CD8-positive, alpha-beta T cell (primary cell): ENCODE measurements at regions of chr19 and their contacts with region 1.

Region 1: GRCh38 chr19:18203863-18204393 is at the start of gene RAB3A:
- DNase-seq: peak; percentile 98 to 100 (median 100)
- ATAC-seq: peak; percentile 90
- H3K4me3 ChIP-seq: peak within 1 kb of the TSS; percentile 60 to 91
- H3K4me3 Mint-ChIP-seq: peak within 1 kb of the TSS; percentile 96
- H3K27ac ChIP-seq: peak within 1 kb of the TSS; percentile 76 to 81
- H3K27ac Mint-ChIP-seq: peak within 1 kb of the TSS; percentile 96
- H3K4me1 ChIP-seq: peaks cover 17% of the 10 kb centered on the region
- H3K4me1 Mint-ChIP-seq: peaks cover 21% of the 10 kb centered on the region
- H3K27me3 ChIP-seq: no peaks in the 10 kb centered on the region
- H3K27me3 Mint-ChIP-seq: peaks cover 5% of the 10 kb centered on the region
- CTCF ChIP-seq: no peak
- total RNA-seq, gene RAB3A: 16.8 to 19.4 TPM

Region 2: GRCh38 chr19:18007044-18007916 is 196.6 kb before region 1 on chr19:
- CTCF ChIA-PET with region 1: no interaction called
- POLR2A ChIA-PET with region 1: no interaction called
- intact Hi-C with region 1: loop called in 1 of 2 experiments (anchors 1 kb)
- DNase-seq: peak; percentile 66 to 90 (median 80)
- ATAC-seq: peak; percentile 57
- H3K4me3 ChIP-seq: peak overlapping the region; percentile 48 to 61
- H3K4me3 Mint-ChIP-seq: peak overlapping the region; percentile 88
- H3K27ac ChIP-seq: peak overlapping the region; percentile 69 to 72
- H3K27ac Mint-ChIP-seq: peak overlapping the region; percentile 89
- H3K4me1 ChIP-seq: peaks cover 43% of the 10 kb centered on the region
- H3K4me1 Mint-ChIP-seq: peaks cover 40% of the 10 kb centered on the region
- H3K27me3 ChIP-seq: no peaks in the 10 kb centered on the region
- H3K27me3 Mint-ChIP-seq: no peaks in the 10 kb centered on the region
- CTCF ChIP-seq: peak; percentile 97

Region 3: GRCh38 chr19:18192673-18193387 is 11.1 kb before region 1 on chr19 and contains the start of gene MPV17L2:
- CTCF ChIA-PET with region 1: interaction called, 23 read pairs
- POLR2A ChIA-PET with region 1: interaction called, 10 read pairs
- intact Hi-C with region 1: loop called (anchors 1 kb)
- DNase-seq: peak; percentile 95 to 100 (median 97)
- ATAC-seq: peak; percentile 84
- H3K4me3 ChIP-seq: peak within 1 kb of the TSS; percentile 73
- H3K4me3 Mint-ChIP-seq: peak within 1 kb of the TSS; percentile 87
- H3K27ac ChIP-seq: peak within 1 kb of the TSS; percentile 64 to 82
- H3K27ac Mint-ChIP-seq: peak within 1 kb of the TSS; percentile 90
- H3K4me1 ChIP-seq: peaks cover 18% of the 10 kb centered on the region
- H3K4me1 Mint-ChIP-seq: peaks cover 22% of the 10 kb centered on the region
- H3K27me3 ChIP-seq: no peaks in the 10 kb centered on the region
- H3K27me3 Mint-ChIP-seq: no peaks in the 10 kb centered on the region
- CTCF ChIP-seq: no peak
- total RNA-seq, gene MPV17L2: 4.0 to 5.2 TPM

Region 4: GRCh38 chr19:18328340-18329034 is 124.6 kb after region 1 on chr19:
- CTCF ChIA-PET with region 1: interaction called, 3 read pairs
- POLR2A ChIA-PET with region 1: interaction called, 3 read pairs
- intact Hi-C with region 1: loop called (anchors 1 to 2 kb)
- DNase-seq: peak; percentile 75 to 94 (median 84)
- ATAC-seq: peak; percentile 99
- H3K4me3 ChIP-seq: peak overlapping the region; percentile 17 to 25
- H3K4me3 Mint-ChIP-seq: peak overlapping the region; percentile 62
- H3K27ac ChIP-seq: peak overlapping the region in 1 of 2 experiments; percentile 31
- H3K27ac Mint-ChIP-seq: peak overlapping the region; percentile 2
- H3K4me1 ChIP-seq: peaks cover 14% of the 10 kb centered on the region
- H3K4me1 Mint-ChIP-seq: peaks cover 13% of the 10 kb centered on the region
- H3K27me3 ChIP-seq: no peaks in the 10 kb centered on the region
- H3K27me3 Mint-ChIP-seq: no peaks in the 10 kb centered on the region
- CTCF ChIP-seq: peak; percentile 85

Region 5: GRCh38 chr19:18419195-18419698 is 215.3 kb after region 1 on chr19 and contains the start of gene SSBP4:
- CTCF ChIA-PET with region 1: interaction called, 3 read pairs
- POLR2A ChIA-PET with region 1: no interaction called
- intact Hi-C with region 1: loop called in 1 of 2 experiments (anchors 2 kb)
- DNase-seq: peak; percentile 43 to 87 (median 61)
- ATAC-seq: peak; percentile 50
- H3K4me3 ChIP-seq: peak within 1 kb of the TSS; percentile 55 to 74
- H3K4me3 Mint-ChIP-seq: peak within 1 kb of the TSS; percentile 84
- H3K27ac ChIP-seq: peak within 1 kb of the TSS in 1 of 2 experiments; percentile 74
- H3K27ac Mint-ChIP-seq: peak within 1 kb of the TSS; percentile 91
- H3K4me1 ChIP-seq: peaks cover 87% of the 10 kb centered on the region
- H3K4me1 Mint-ChIP-seq: peaks cover 77% of the 10 kb centered on the region
- H3K27me3 ChIP-seq: peaks cover 0 to 7% of the 10 kb centered on the region in 2 experiments
- H3K27me3 Mint-ChIP-seq: peaks cover 14% of the 10 kb centered on the region
- CTCF ChIP-seq: no peak
- total RNA-seq, gene SSBP4: 49.9 to 58.2 TPM